ENCODE measurements at regions of chr1 and their contacts with region 1.

Region 1: GRCh38 chr1:160675641-160676410 is 29.0 kb upstream of the SLAMF1 start:
- DNase-seq: peak; percentile 57 to 83 (median 72)
- ATAC-seq: peak; percentile 69 to 85 (median 82)
- H3K4me3 ChIP-seq: no peak overlapping the region
- H3K27ac ChIP-seq: no peak overlapping the region
- H3K4me1 ChIP-seq: peaks cover 0 to 46% (median 0%) of the 10 kb centered on the region in 12 donors
- H3K27me3 ChIP-seq: peaks cover 0 to 15% (median 0%) of the 10 kb centered on the region in 9 donors
- CTCF ChIP-seq: peak; percentile 57 to 82 (median 76)
- POLR2A ChIP-seq: no peak

Region 2: GRCh38 chr1:160821628-160822027 is 145.8 kb after region 1 on chr1:
- intact Hi-C with region 1: loop called in 1 of 10 experiments (anchors 10 kb)
- DNase-seq: no peak
- ATAC-seq: no peak
- H3K4me3 ChIP-seq: no peak overlapping the region
- H3K27ac ChIP-seq: no peak overlapping the region
- H3K4me1 ChIP-seq: no peaks in the 10 kb centered on the region
- H3K27me3 ChIP-seq: peaks cover 0 to 8% (median 0%) of the 10 kb centered on the region in 9 donors
- CTCF ChIP-seq: no peak
- POLR2A ChIP-seq: no peak

Region 3: GRCh38 chr1:161139765-161140164 is 463.9 kb after region 1 on chr1:
- intact Hi-C with region 1: loop called in 1 of 10 experiments (anchors 10 kb)
- DNase-seq: peak in 1 of 5 donors; percentile 39
- ATAC-seq: peak in 1 of 4 donors; percentile 49
- H3K4me3 ChIP-seq: no peak overlapping the region
- H3K27ac ChIP-seq: no peak overlapping the region
- H3K4me1 ChIP-seq: peaks cover 0 to 33% (median 0%) of the 10 kb centered on the region in 12 donors
- H3K27me3 ChIP-seq: no peaks in the 10 kb centered on the region
- CTCF ChIP-seq: peak in 11 of 12 donors; percentile 20 to 65 (median 52)
- POLR2A ChIP-seq: no peak

Measured in heart left ventricle (tissue), 16 donors.